ENCODE measurements at regions of chr2 and their contacts with region 1.

Region 1: GRCh38 chr2:237572021-237572741 is 5.8 kb downstream of the PRLH start:
- DNase-seq: peak; percentile 86
- ATAC-seq: peak; percentile 95
- H3K4me3 Mint-ChIP-seq: no peak overlapping the region
- H3K27ac Mint-ChIP-seq: no peak overlapping the region
- H3K4me1 Mint-ChIP-seq: no peaks in the 10 kb centered on the region
- H3K27me3 Mint-ChIP-seq: peaks cover 8% of the 10 kb centered on the region

Region 2: DNA sequence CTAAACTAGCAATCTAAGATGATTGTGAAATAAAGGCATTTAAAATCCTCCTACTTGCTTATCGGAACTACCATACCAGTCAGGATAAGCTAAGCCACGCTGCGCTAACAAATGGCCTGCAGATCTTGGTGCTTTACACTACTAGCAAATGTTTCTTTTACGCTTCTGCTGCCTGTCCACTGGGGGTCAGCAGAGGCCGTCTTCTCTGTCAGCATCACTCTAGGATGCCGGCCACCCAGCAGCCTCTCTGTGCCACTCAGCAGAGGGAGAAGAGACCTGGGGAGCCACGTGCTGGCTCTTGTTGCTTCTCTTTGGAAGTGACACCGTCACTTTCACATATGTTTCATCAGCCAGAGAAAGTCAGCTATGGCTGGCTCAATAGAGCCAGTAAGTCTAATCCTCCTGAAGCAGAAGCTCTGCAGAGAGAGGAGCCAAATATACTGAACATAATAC is 449.9 kb before region 1 on chr2:
- CTCF ChIA-PET with region 1: interaction called, 13 read pairs
- DNase-seq: peak; percentile 72
- ATAC-seq: peak; percentile 81
- H3K4me3 Mint-ChIP-seq: no peak overlapping the region
- H3K27ac Mint-ChIP-seq: no peak overlapping the region
- H3K4me1 Mint-ChIP-seq: peaks cover 3% of the 10 kb centered on the region
- H3K27me3 Mint-ChIP-seq: no peaks in the 10 kb centered on the region

Region 3: DNA sequence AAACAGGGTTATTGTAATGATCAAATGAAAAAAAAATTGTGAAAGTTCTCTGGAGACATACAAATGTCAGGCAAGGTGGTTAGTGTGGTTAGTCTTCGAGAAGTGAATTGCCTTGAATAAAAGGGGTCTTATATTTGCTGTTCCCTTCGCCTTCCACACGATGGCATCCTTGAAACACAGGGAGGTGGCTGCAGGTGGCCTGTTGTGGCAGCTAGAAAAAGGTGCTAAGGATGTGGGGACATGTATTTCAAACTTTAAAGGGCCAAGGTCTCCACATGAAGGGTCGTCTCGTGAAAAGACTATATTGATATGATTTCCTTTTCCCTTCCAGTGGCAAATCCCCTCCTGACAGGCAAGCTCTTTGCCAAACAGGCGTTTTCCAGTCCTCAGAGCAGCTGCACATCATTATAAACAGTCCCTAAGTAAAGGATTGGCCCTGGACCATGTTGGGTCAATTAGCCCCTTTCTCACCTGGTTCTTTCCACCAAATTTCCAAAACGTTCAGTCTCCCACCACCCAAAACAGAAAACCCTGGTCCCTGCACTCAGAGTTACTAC is 418.0 kb before region 1 on chr2:
- CTCF ChIA-PET with region 1: interaction called, 11 read pairs
- DNase-seq: peak; percentile 71
- ATAC-seq: peak; percentile 34
- H3K4me3 Mint-ChIP-seq: no peak overlapping the region
- H3K27ac Mint-ChIP-seq: no peak overlapping the region
- H3K4me1 Mint-ChIP-seq: peaks cover 38% of the 10 kb centered on the region
- H3K27me3 Mint-ChIP-seq: no peaks in the 10 kb centered on the region

Measured in activated CD8-positive, alpha-beta memory T cell treated with anti-CD3 and anti-CD28 coated beads, Interleukin-2, amount 10 ng/mL, durations not matched to agents 7 days and 5 days (primary cell).